ENCODE measurements at regions of chr6 and their contacts with region 1.

Region 1: DNA sequence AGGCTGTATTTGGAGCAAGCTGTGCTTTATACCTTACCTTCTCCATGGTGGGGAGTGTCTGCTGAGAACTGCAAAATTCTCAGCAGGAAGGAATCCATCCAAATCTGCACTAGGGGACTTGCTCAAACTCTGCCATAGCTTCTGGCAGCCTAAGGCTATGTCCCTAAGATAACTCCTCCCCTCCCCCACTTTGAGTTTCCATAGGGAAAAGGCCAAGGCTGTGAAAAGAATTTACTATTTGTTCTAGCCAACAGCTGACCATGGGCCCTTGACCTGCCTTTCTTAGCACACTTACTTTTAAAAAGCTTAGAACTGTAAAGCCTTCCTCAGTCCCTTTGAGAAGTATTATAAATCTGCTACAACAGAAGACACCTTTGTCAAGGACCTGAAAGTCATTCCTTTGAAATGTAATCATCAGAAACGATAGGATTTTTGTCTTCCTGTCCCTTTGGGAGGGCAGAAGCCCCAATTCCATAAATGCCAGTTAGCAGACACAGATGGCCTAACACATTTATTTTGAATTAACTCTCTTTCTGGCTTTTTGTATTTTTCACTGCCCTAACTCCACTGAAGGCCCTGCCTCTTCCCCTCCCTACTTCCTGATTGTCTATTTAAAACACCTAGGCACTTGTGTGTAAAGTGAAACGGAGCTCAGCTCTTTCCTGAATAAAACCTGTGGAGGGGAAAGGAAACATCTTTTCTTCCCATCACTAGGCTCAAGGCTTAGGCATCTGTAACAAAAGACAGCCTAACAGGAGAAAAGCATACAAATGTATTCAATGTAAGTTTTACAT is 157.1 kb downstream of the AKAP7 start:
- DNase-seq: no peak
- H3K4me3 ChIP-seq: no peak overlapping the region
- H3K27ac ChIP-seq: no peak overlapping the region
- H3K4me1 ChIP-seq: no peaks in the 10 kb centered on the region
- H3K27me3 ChIP-seq: no peaks in the 10 kb centered on the region
- CTCF ChIP-seq: no peak
- POLR2A ChIP-seq: no peak

Region 2: GRCh38 chr6:129475477-129476247 is 1816.7 kb before region 1 on chr6:
- intact Hi-C with region 1: no loop called
- DNase-seq: no peak
- H3K4me3 ChIP-seq: no peak overlapping the region
- H3K27ac ChIP-seq: no peak overlapping the region
- H3K4me1 ChIP-seq: no peaks in the 10 kb centered on the region
- H3K27me3 ChIP-seq: no peaks in the 10 kb centered on the region
- CTCF ChIP-seq: no peak
- POLR2A ChIP-seq: no peak

Region 3: DNA sequence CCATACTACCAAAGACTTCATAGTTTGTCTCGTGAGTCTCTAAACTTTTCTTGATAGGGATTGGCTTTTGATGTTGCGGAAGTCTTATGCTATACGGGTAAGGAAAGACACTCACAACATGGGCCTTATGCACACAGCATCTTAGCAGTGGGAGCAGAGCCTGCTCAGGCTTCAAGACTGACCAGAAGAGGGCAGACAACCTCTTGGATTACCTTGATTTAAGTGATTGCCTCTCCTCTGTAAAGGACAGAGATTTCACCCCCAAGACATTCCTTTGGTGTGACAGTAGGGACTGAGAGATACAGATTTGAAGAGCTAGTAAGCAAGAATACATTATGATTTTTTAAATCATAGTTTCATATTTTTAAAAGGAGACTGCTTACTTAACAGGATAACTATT is 998.5 kb before region 1 on chr6:
- intact Hi-C with region 1: loop called (anchors 10 kb)
- DNase-seq: no peak
- H3K4me3 ChIP-seq: no peak overlapping the region
- H3K27ac ChIP-seq: no peak overlapping the region
- H3K4me1 ChIP-seq: no peaks in the 10 kb centered on the region
- H3K27me3 ChIP-seq: no peaks in the 10 kb centered on the region
- CTCF ChIP-seq: peak in 2 of 3 donors; percentile 12 to 22
- POLR2A ChIP-seq: no peak